Activated CD8-positive, alpha-beta T cell treated with anti-CD3 and anti-CD28 coated beads, Interleukin-2, amount 10 ng/mL, durations not matched to agents 7 days and 5 days (primary cell): ENCODE measurements at regions of chr17 and their contacts with region 1.

Region 1: DNA sequence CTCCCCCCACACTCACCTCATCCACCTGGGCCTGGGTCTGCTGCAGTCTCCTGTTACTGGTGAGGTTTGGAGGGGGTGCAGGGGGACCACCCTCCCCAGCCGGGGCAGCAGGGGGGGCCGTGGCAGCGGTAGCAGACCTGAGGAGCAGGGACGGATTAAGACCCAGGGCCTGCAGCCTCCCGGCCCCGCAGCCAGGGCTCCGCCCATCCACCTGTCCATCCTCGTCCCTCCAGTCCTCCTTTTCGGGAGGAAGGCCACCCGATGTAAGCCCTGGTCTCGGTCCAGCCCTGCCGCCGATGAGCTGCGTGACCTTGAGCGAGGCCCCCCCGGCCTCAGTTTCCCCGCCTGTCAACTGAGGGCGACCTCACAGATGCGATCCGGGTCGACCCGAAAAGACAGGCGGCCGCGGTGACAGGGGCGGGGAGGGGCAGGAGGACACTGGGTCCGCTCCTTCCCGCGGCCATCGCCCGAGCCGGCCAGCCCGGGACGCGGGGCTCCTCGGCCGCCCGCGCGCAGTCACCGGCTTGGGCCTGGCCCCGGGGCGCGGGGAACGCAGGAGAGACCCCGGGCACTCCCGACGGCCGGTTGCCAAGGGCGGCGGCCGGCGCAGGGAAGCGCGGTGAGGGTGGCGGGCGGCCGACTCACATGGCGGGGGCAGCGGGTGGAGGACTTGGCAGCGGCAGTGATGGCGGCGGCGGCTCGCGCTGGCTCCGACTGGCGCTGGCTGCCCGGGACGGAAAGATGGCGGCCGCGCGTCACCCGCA is at the start of gene VAMP2:
- DNase-seq: peak; percentile 87
- ATAC-seq: peak; percentile 58
- H3K4me3 Mint-ChIP-seq: peak within 1 kb of the TSS; percentile 79
- H3K27ac Mint-ChIP-seq: peak within 1 kb of the TSS; percentile 94
- H3K4me1 Mint-ChIP-seq: peaks cover 63% of the 10 kb centered on the region
- H3K27me3 Mint-ChIP-seq: no peaks in the 10 kb centered on the region
- total RNA-seq, gene VAMP2: 56.3 to 56.7 TPM

Region 2: DNA sequence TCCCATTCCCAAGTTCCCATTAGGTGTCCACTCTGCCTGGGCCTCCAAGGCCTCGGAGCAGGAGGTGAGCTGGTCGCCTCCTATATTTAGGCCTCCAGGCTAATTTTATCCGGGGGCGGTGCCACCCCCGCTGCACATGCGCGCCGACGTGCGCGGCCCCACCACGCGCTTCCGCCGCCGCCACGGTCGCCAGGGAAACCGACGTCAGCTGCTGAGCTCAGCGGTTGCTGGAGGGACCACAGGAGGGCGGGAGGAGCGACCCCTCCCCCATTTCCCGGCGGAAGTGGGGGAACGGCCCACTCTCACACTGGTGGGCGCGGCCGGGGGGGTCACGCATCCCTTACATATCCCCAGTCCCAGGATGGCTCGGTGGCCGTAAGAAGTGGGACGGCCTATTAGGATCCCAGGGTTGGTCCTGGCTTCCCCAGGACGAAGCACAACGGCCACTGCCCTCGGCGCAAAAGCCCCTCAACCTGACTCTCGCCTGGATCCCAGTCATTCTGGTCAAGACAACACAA is 11.2 kb before region 1 on chr17:
- CTCF ChIA-PET with region 1: interaction called, 4 read pairs
- POLR2A ChIA-PET with region 1: interaction called, 15 read pairs
- DNase-seq: peak; percentile 93
- ATAC-seq: peak; percentile 42
- H3K4me3 Mint-ChIP-seq: peak overlapping the region; percentile 85
- H3K27ac Mint-ChIP-seq: peak overlapping the region; percentile 91
- H3K4me1 Mint-ChIP-seq: peaks cover 15% of the 10 kb centered on the region
- H3K27me3 Mint-ChIP-seq: no peaks in the 10 kb centered on the region

Region 3: GRCh38 chr17:8311131-8311790 is 148.8 kb after region 1 on chr17:
- CTCF ChIA-PET with region 1: no interaction called
- POLR2A ChIA-PET with region 1: no interaction called
- DNase-seq: no peak
- ATAC-seq: no peak
- H3K4me3 Mint-ChIP-seq: no peak overlapping the region
- H3K27ac Mint-ChIP-seq: no peak overlapping the region
- H3K4me1 Mint-ChIP-seq: no peaks in the 10 kb centered on the region
- H3K27me3 Mint-ChIP-seq: peaks cover 12% of the 10 kb centered on the region